ENCODE measurements at regions of chr3 and their contacts with region 1.

Region 1: GRCh38 chr3:108477511-108478147 is 32.8 kb downstream of the MYH15 start:
- DNase-seq: peak; percentile 23 to 78 (median 44)
- ATAC-seq: peak; percentile 89
- H3K4me3 ChIP-seq: no peak overlapping the region
- H3K4me3 Mint-ChIP-seq: no peak overlapping the region
- H3K27ac ChIP-seq: no peak overlapping the region
- H3K27ac Mint-ChIP-seq: no peak overlapping the region
- H3K4me1 ChIP-seq: no peaks in the 10 kb centered on the region
- H3K4me1 Mint-ChIP-seq: peaks cover 4% of the 10 kb centered on the region
- H3K27me3 ChIP-seq: no peaks in the 10 kb centered on the region
- H3K27me3 Mint-ChIP-seq: no peaks in the 10 kb centered on the region
- CTCF ChIP-seq: peak; percentile 72

Region 2: GRCh38 chr3:108153451-108153981 is 324.1 kb before region 1 on chr3:
- CTCF ChIA-PET with region 1: interaction called, 10 read pairs
- POLR2A ChIA-PET with region 1: no interaction called
- intact Hi-C with region 1: loop called (anchors 2 to 5 kb)
- DNase-seq: peak; percentile 5 to 73 (median 28)
- ATAC-seq: peak; percentile 57
- H3K4me3 ChIP-seq: no peak overlapping the region
- H3K4me3 Mint-ChIP-seq: no peak overlapping the region
- H3K27ac ChIP-seq: no peak overlapping the region
- H3K27ac Mint-ChIP-seq: no peak overlapping the region
- H3K4me1 ChIP-seq: peaks cover 4% of the 10 kb centered on the region
- H3K4me1 Mint-ChIP-seq: peaks cover 12% of the 10 kb centered on the region
- H3K27me3 ChIP-seq: no peaks in the 10 kb centered on the region
- H3K27me3 Mint-ChIP-seq: no peaks in the 10 kb centered on the region
- CTCF ChIP-seq: peak; percentile 50

Region 3: GRCh38 chr3:108623504-108623903 is 145.9 kb after region 1 on chr3:
- CTCF ChIA-PET with region 1: no interaction called
- POLR2A ChIA-PET with region 1: no interaction called
- intact Hi-C with region 1: no loop called
- DNase-seq: no peak
- ATAC-seq: no peak
- H3K4me3 ChIP-seq: no peak overlapping the region
- H3K4me3 Mint-ChIP-seq: no peak overlapping the region
- H3K27ac ChIP-seq: no peak overlapping the region
- H3K27ac Mint-ChIP-seq: no peak overlapping the region
- H3K4me1 ChIP-seq: no peaks in the 10 kb centered on the region
- H3K4me1 Mint-ChIP-seq: no peaks in the 10 kb centered on the region
- H3K27me3 ChIP-seq: no peaks in the 10 kb centered on the region
- H3K27me3 Mint-ChIP-seq: no peaks in the 10 kb centered on the region
- CTCF ChIP-seq: no peak

Region 4: DNA sequence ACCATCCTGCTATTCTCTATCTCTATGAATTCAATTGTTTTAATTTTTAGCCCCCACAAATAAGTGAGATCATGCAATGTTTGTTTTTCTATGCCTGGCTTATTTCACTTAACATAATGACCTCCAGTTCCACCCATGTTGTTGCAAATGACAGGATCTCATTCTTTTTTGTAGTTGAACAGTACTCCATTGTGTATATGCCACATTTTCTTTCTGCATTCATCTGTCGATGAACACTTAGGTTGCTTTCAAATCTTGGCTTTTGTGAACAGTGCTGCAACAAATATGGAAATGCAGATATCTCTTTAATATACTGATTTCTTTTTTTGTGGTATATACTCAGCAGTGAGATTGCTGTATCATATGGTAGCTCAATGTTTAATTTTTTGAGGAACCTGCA is 220.8 kb after region 1 on chr3:
- CTCF ChIA-PET with region 1: no interaction called
- POLR2A ChIA-PET with region 1: no interaction called
- intact Hi-C with region 1: no loop called
- DNase-seq: no peak
- ATAC-seq: no peak
- H3K4me3 ChIP-seq: no peak overlapping the region
- H3K4me3 Mint-ChIP-seq: no peak overlapping the region
- H3K27ac ChIP-seq: no peak overlapping the region
- H3K27ac Mint-ChIP-seq: no peak overlapping the region
- H3K4me1 ChIP-seq: no peaks in the 10 kb centered on the region
- H3K4me1 Mint-ChIP-seq: no peaks in the 10 kb centered on the region
- H3K27me3 ChIP-seq: no peaks in the 10 kb centered on the region
- H3K27me3 Mint-ChIP-seq: no peaks in the 10 kb centered on the region
- CTCF ChIP-seq: no peak

Region 5: GRCh38 chr3:109224333-109224732 is 746.7 kb after region 1 on chr3:
- CTCF ChIA-PET with region 1: no interaction called
- POLR2A ChIA-PET with region 1: no interaction called
- intact Hi-C with region 1: no loop called
- DNase-seq: peak in 1 of 14 experiments; percentile 12
- ATAC-seq: no peak
- H3K4me3 ChIP-seq: no peak overlapping the region
- H3K4me3 Mint-ChIP-seq: no peak overlapping the region
- H3K27ac ChIP-seq: no peak overlapping the region
- H3K27ac Mint-ChIP-seq: no peak overlapping the region
- H3K4me1 ChIP-seq: no peaks in the 10 kb centered on the region
- H3K4me1 Mint-ChIP-seq: no peaks in the 10 kb centered on the region
- H3K27me3 ChIP-seq: no peaks in the 10 kb centered on the region
- H3K27me3 Mint-ChIP-seq: peaks cover 7% of the 10 kb centered on the region
- CTCF ChIP-seq: no peak

Measured in CD4-positive, alpha-beta T cell (primary cell).